Activated CD4-positive, alpha-beta T cell treated with anti-CD3 and anti-CD28 coated beads, Interleukin-2, amount 10 ng/mL, durations not matched to agents 24 days and 14 days (primary cell): ENCODE measurements at regions of chr2 and their contacts with region 1.

Region 1: DNA sequence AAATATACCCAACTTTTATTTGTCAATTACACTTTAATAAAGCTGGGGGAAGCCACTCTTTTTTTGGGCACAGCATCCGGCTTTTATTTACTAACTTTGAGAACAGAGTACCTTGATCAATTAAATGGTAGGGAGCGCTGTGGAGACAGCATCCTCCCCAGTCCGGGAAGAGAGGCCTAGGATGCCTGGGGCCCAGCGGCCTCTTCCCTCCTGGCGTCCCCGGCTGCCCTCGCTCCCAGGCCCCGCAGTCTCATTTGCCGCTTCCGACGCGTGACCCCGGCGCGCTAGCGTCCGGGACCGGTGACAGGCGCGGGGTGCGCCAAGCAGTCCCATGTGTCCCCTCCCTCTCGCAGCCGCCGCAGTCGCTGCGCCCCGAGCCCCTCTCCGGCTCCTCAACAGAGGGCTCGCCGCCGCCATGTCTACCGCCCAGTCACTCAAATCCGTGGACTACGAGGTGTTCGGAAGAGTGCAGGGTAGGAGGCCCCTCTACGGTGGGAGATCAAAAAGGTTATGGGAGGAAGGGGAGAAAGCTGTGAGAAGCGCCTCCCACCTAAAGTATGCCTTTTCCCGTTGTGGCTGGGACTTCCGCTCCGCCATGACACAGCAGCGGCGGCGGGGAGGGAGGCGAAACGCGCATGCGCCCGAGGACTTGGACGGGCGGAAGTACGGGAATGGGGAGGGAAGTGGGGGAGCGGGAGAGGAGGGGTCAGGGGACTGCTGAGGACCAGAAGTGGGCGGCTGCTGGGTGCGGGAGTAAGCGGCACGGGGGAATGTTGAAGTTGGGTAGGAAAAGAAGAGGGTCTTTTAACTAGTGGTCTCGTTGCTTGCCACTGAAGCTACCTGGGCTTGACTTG is at the start of gene ACYP2:
- DNase-seq: peak; percentile 97
- H3K4me3 Mint-ChIP-seq: peak within 1 kb of the TSS; percentile 98
- H3K27ac Mint-ChIP-seq: peak within 1 kb of the TSS; percentile 100
- H3K4me1 Mint-ChIP-seq: peaks cover 17% of the 10 kb centered on the region
- H3K27me3 Mint-ChIP-seq: peaks cover 9% of the 10 kb centered on the region
- total RNA-seq, gene ACYP2: 4.0 and 5.9 TPM in 2 replicates

Region 2: GRCh38 chr2:53767405-53768241 is 347.9 kb before region 1 on chr2 and contains the start of gene CHAC2:
- intact Hi-C with region 1: loop called (anchors 1 kb)
- DNase-seq: peak; percentile 96
- H3K4me3 Mint-ChIP-seq: peak within 1 kb of the TSS; percentile 92
- H3K27ac Mint-ChIP-seq: peak within 1 kb of the TSS; percentile 98
- H3K4me1 Mint-ChIP-seq: peaks cover 24% of the 10 kb centered on the region
- H3K27me3 Mint-ChIP-seq: no peaks in the 10 kb centered on the region
- total RNA-seq, gene CHAC2: 24.8 and 27.4 TPM in 2 replicates

Region 3: DNA sequence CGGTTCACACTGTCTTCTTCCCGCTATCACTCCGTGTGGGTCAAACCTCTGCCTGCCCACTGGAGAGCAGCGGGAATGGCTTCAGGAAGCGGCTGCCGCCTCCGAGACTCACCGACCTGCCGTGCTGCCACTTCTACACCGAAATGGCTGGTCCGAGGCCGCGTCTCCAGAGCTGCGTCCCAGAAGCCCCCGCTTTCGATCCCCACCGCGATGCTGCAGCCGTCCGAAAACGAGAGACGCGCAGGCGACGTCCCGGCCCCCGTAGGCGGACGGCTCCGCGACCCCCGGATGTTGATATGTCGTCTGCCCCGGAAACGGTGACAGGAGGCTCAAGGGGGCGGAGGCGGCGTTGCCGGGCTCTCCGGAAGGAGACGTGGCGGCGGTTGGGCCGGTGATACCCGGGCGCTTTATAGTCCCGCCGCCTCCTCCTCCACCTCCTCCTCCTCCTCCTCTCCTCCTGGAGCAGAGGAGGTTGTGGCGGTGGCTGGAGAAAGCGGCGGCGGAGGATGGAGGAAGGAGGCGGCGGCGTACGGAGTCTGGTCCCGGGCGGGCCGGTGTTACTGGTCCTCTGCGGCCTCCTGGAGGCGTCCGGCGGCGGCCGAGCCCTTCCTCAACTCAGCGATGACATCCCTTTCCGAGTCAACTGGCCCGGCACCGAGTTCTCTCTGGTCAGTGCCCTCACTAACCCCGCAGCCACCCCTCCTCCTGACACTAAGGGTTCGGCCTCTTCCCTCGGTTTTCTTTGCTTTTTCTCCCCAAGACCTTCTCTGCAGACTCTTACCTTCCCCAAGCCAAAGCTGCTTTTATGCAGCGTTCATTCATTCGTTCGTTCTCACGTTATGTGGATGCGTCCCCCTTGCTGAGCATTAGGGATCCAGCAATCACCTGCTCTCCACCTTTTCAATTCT is 328.6 kb before region 1 on chr2 and contains the starts of genes ASB3 and ERLEC1:
- intact Hi-C with region 1: loop called (anchors 2 kb)
- DNase-seq: peak; percentile 97
- H3K4me3 Mint-ChIP-seq: peak within 1 kb of the TSS; percentile 97
- H3K27ac Mint-ChIP-seq: peak within 1 kb of the TSS; percentile 96
- H3K4me1 Mint-ChIP-seq: peaks cover 30% of the 10 kb centered on the region
- H3K27me3 Mint-ChIP-seq: no peaks in the 10 kb centered on the region
- total RNA-seq, gene ASB3: 19.6 and 24.0 TPM in 2 replicates
- total RNA-seq, gene ERLEC1: 24.1 and 24.9 TPM in 2 replicates

Region 4: GRCh38 chr2:53994818-53995808 is 120.4 kb before region 1 on chr2:
- intact Hi-C with region 1: loop called (anchors 1 kb)
- DNase-seq: peak; percentile 69
- H3K4me3 Mint-ChIP-seq: peak overlapping the region; percentile 58
- H3K27ac Mint-ChIP-seq: peak overlapping the region; percentile 68
- H3K4me1 Mint-ChIP-seq: peaks cover 20% of the 10 kb centered on the region
- H3K27me3 Mint-ChIP-seq: no peaks in the 10 kb centered on the region

Region 5: DNA sequence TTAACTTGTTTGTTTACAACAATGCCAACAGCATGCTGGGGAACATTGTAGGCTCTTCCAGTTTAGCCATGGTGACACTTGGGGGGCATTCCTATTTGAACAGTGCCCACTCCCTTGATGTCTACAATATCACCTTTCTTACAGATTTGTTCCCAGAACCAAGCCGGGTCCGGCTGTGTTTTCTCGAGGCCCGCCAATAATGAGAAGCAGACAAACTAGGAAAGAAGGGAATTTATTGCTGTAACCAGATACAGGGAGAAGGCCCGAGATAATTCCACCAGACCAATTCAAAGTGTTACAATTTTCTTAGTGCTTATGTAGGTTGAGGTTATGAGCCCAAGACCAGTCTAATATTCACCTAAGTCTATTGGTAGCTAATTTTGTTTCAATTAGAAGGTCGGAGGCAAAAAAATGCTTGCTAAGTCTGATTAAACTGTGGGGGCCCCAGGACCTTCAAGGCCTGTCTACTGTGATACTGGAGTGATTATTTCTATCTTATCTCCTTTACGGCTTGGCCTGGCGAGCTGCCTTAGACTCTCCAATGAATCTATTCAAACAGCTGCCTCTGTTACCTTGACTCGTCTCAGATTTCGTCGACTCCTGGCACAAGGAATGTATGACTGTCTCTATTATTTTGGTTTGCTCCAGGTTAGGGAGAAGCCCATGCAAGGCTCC is 85.7 kb before region 1 on chr2:
- intact Hi-C with region 1: no loop called
- DNase-seq: no peak
- H3K4me3 Mint-ChIP-seq: no peak overlapping the region
- H3K27ac Mint-ChIP-seq: no peak overlapping the region
- H3K4me1 Mint-ChIP-seq: no peaks in the 10 kb centered on the region
- H3K27me3 Mint-ChIP-seq: peaks cover 1% of the 10 kb centered on the region

Region 6: DNA sequence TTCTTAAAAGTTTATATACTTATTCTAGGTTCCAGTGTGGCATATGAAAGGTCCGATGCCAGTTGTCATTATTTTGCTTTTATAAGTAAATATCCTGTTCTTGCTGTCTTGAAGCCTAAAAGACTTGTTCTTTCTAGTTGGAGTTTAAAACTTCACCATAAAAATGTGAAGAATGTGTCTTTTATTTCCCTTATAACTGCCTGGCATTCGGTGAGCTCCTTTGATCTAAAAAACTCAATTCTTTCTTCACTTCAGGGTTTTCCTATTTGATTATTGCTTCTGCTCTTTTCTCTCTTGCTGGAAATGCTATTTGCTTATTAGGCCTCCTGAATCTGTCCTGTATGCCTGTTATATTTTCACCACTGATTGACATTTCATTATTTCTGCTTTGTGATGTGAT is 89.0 kb after region 1 on chr2:
- intact Hi-C with region 1: no loop called
- DNase-seq: no peak
- H3K4me3 Mint-ChIP-seq: no peak overlapping the region
- H3K27ac Mint-ChIP-seq: no peak overlapping the region
- H3K4me1 Mint-ChIP-seq: peaks cover 4% of the 10 kb centered on the region
- H3K27me3 Mint-ChIP-seq: peaks cover 1% of the 10 kb centered on the region

Region 7: GRCh38 chr2:54330162-54330925 is 214.8 kb after region 1 on chr2:
- intact Hi-C with region 1: loop called (anchors 5 kb)
- DNase-seq: peak; percentile 96
- H3K4me3 Mint-ChIP-seq: peak overlapping the region; percentile 85
- H3K27ac Mint-ChIP-seq: peak overlapping the region; percentile 78
- H3K4me1 Mint-ChIP-seq: peaks cover 18% of the 10 kb centered on the region
- H3K27me3 Mint-ChIP-seq: peaks cover 29% of the 10 kb centered on the region

Region 8: GRCh38 chr2:54455563-54456361 is 340.3 kb after region 1 on chr2 and contains the start of gene SPTBN1:
- intact Hi-C with region 1: loop called (anchors 2 kb)
- DNase-seq: peak; percentile 61
- H3K4me3 Mint-ChIP-seq: peak within 1 kb of the TSS; percentile 87
- H3K27ac Mint-ChIP-seq: no peak within 1 kb of the TSS
- H3K4me1 Mint-ChIP-seq: peaks cover 10% of the 10 kb centered on the region
- H3K27me3 Mint-ChIP-seq: peaks cover 60% of the 10 kb centered on the region
- total RNA-seq, gene SPTBN1: 52.6 and 53.8 TPM in 2 replicates

Region 9: DNA sequence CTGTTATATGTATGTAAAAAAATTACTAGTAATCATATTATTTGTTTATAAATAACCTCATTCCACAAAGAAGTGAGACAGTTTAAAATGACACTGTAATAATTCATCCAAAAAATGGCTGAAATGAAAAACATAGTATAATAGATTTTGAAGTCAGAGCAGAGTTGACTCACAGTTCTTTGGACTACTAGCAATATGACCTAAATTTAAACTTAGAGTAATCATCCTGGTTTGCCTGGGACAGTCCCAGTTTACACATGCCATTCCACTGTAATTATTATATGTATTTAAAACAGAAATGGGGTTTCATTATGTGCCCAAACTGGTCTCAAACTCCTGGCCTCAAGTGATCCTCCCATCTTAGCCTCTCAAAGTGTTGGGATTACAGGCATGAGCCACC is 1255.9 kb after region 1 on chr2:
- intact Hi-C with region 1: no loop called
- DNase-seq: no peak
- H3K4me3 Mint-ChIP-seq: no peak overlapping the region
- H3K27ac Mint-ChIP-seq: no peak overlapping the region
- H3K4me1 Mint-ChIP-seq: no peaks in the 10 kb centered on the region
- H3K27me3 Mint-ChIP-seq: no peaks in the 10 kb centered on the region